Activated CD4-positive, alpha-beta T cell treated with anti-CD3 and anti-CD28 coated beads for 36 hours (primary cell): ENCODE measurements at regions of chr1 and their contacts with region 1.

Region 1: DNA sequence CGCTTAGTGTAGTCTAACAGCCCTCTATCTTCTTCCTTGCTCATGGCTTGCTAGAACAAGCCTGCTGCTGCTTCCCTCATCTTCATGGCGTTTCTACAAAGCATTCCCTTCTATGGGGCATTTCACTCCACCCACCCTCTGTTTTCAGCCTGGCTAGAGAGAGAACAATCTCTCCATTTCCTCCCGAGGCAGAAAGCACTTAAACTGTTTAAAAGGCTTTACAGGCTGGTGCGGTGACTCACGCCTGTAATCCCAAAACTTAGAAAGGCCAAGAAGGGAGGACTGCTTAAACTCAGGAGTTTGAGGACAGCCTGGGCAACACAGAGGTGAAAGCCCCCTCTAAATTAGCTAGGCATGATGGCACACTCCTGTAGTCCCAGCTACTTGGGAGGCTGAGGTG is 17.8 kb downstream of the ORC1 start:
- DNase-seq: no peak
- ATAC-seq: no peak
- H3K4me3 Mint-ChIP-seq: no peak overlapping the region
- H3K27ac Mint-ChIP-seq: no peak overlapping the region
- H3K4me1 Mint-ChIP-seq: no peaks in the 10 kb centered on the region
- H3K27me3 Mint-ChIP-seq: no peaks in the 10 kb centered on the region

Region 2: DNA sequence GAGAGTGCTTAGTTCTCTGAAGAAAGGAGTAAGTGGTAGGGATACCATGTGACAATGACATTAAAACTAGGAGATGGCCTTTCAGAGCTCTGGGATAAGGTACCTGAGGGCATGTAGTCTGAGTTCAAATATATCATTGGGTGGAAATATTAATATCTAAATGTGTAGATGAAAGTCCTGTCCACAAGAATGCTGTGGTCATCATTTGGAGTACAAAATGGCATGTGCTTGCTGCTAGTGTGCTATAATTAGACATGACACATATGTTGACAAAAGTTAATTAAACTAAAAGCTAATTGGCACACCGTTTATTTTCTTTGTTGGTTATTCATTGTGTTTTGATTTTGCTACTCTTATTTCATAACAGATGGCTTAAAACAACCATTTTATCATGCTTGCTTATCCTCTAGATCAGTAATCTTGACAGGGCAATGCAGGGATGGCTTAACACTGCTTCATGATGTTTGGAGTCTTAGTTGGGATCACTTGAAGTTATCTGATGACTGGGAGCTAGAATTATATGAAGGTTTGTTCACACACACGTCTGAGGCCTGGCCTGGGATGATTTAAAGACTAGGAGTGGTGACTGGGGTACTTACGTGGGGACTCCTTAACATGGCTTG is 51.4 kb before region 1 on chr1:
- CTCF ChIA-PET with region 1: no interaction called
- POLR2A ChIA-PET with region 1: no interaction called
- intact Hi-C with region 1: loop called in 1 of 2 experiments (anchors 5 kb)
- DNase-seq: no peak
- ATAC-seq: no peak
- H3K4me3 Mint-ChIP-seq: no peak overlapping the region
- H3K27ac Mint-ChIP-seq: no peak overlapping the region
- H3K4me1 Mint-ChIP-seq: no peaks in the 10 kb centered on the region
- H3K27me3 Mint-ChIP-seq: no peaks in the 10 kb centered on the region

Region 3: GRCh38 chr1:52365746-52366516 is 20.5 kb before region 1 on chr1 and contains the start of gene CC2D1B:
- CTCF ChIA-PET with region 1: no interaction called
- POLR2A ChIA-PET with region 1: no interaction called
- intact Hi-C with region 1: no loop called
- DNase-seq: peak; percentile 99
- ATAC-seq: peak; percentile 94
- H3K4me3 Mint-ChIP-seq: peak within 1 kb of the TSS; percentile 94
- H3K27ac Mint-ChIP-seq: peak within 1 kb of the TSS; percentile 93
- H3K4me1 Mint-ChIP-seq: peaks cover 44% of the 10 kb centered on the region
- H3K27me3 Mint-ChIP-seq: no peaks in the 10 kb centered on the region
- total RNA-seq, gene CC2D1B: 22.6 to 25.3 TPM

Region 4: DNA sequence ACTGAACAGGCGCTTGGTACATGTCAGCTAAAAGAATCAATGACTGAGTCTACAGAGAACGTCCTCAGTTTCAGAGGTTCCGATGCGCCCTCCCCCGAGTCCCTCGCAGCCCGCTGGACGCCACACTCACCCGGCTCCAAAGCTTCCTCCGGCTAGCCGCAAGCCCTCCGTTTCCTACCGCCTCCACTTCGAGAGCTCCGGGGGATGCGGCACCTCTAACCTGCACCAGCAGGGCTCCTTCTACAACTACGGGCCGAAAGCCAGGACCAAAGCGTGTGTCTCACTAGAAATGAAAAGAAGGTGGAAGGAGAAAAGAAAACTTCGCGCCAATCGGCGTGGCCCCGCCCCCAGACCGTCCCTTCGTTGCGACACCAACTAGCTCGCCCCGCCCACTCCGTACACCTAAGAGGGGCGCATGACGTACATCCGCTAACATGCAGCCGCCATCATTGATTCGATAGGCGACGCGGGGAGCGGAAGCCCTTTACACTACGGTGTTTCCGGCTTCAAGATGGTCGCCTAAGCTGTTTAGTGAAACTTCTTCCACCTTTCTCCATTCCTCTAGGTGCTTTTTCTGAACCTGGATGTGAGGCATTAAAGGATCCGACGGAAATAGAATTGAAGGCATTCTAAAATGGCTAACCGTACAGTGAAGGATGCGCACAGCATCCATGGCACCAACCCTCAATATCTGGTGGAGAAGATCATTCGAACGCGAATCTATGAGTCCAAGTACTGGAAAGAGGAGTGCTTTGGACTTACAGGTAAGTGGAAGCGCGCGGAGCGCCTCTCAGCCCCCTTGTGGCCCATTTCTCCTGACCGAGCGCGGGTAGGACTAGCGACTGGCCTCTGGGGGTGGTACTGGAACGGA is 17.9 kb after region 1 on chr1 and contains the starts of genes ORC1 and PRPF38A:
- CTCF ChIA-PET with region 1: no interaction called
- POLR2A ChIA-PET with region 1: no interaction called
- intact Hi-C with region 1: no loop called
- DNase-seq: peak; percentile 99
- ATAC-seq: peak; percentile 92
- H3K4me3 Mint-ChIP-seq: peak within 1 kb of the TSS; percentile 98
- H3K27ac Mint-ChIP-seq: peak within 1 kb of the TSS; percentile 99
- H3K4me1 Mint-ChIP-seq: peaks cover 45% of the 10 kb centered on the region
- H3K27me3 Mint-ChIP-seq: no peaks in the 10 kb centered on the region
- total RNA-seq, gene ORC1: 51.0 to 57.9 TPM
- total RNA-seq, gene PRPF38A: 88.9 to 103 TPM

Region 5: GRCh38 chr1:52511851-52512615 is 125.6 kb after region 1 on chr1:
- CTCF ChIA-PET with region 1: no interaction called
- POLR2A ChIA-PET with region 1: no interaction called
- intact Hi-C with region 1: no loop called
- DNase-seq: no peak
- ATAC-seq: peak; percentile 94
- H3K4me3 Mint-ChIP-seq: no peak overlapping the region
- H3K27ac Mint-ChIP-seq: no peak overlapping the region
- H3K4me1 Mint-ChIP-seq: peaks cover 15% of the 10 kb centered on the region
- H3K27me3 Mint-ChIP-seq: no peaks in the 10 kb centered on the region